ENCODE measurements at regions of chr5 and their contacts with region 1.

Region 1: DNA sequence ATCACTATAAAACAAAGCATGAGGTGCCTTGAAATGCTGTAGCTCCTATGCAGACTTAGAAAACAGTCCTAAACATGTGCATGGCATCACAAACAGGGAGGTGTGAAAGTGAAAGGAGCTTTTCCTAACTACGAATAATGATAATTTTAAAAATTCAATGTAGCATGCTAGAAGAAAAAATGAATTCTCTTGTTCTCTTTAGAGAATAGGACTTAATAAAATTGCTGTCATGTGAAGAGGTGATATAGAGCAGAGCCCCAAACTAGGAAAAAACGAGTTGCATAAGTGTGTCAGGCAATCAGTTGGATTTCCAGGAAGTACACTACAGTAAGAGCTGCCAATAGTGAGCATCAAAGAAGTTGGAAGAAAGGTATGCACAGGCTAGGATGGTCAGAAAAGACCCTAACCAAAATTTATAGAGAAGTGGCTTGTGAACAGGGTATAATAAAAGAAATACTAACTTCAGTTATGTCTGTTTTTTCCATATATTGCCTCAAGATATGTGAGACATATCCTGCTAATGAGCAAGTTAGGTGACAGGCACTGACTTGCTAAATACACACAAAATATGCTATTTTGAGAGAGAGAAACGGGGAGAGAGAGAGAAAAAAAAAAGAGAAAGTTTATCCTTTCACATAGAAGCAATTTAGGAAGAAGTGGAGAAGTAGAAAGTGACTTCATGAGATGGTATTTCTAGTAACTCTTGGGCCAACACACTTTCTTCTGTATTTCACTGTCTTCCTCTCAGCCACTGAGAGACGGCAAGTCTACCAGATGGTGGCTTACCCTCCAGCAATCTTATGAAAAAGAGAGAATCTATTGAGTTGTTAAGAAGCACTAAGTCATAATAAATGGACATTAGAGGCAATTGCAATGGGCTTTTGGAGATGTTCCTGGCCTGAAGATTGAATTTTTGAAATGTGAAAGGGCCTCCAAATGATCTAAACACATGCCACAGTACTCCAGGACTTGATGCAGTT is 18.0 kb downstream of the ITGA2 start:
- DNase-seq: peak; percentile 71
- H3K4me3 ChIP-seq: peak overlapping the region in 2 of 3 experiments; percentile 1 to 18
- H3K27ac ChIP-seq: peak overlapping the region; percentile 86
- H3K4me1 ChIP-seq: peaks cover 77% of the 10 kb centered on the region
- H3K27me3 ChIP-seq: no peaks in the 10 kb centered on the region
- CTCF ChIP-seq: no peak

Region 2: DNA sequence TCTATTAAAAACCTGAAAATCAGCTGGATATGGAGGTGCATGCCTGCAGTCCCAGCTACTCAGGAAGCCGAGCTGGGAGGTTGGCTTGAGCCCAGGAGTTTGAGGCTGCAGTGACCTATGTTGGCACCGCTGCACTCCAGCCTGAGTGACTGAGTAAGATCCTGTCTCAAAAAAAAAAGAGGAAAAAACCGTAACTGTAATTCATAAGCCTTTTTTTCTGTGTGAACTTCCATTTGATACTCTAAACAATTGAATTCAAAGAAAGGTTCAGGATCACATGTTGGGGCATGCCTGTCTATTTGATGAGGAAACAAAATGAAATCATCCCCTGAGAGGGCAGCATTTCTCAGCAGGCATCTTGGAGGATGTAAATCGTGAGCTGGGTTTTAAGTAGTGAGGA is 20.7 kb after region 1 on chr5:
- CTCF ChIA-PET with region 1: no interaction called
- dilution Hi-C with region 1: no loop called
- in situ Hi-C with region 1: no loop called
- intact Hi-C with region 1: loop called (anchors 1 kb)
- DNase-seq: peak; percentile 92
- H3K4me3 ChIP-seq: no peak overlapping the region
- H3K27ac ChIP-seq: peak overlapping the region; percentile 60
- H3K4me1 ChIP-seq: peaks cover 79% of the 10 kb centered on the region
- H3K27me3 ChIP-seq: no peaks in the 10 kb centered on the region
- CTCF ChIP-seq: no peak

Region 3: DNA sequence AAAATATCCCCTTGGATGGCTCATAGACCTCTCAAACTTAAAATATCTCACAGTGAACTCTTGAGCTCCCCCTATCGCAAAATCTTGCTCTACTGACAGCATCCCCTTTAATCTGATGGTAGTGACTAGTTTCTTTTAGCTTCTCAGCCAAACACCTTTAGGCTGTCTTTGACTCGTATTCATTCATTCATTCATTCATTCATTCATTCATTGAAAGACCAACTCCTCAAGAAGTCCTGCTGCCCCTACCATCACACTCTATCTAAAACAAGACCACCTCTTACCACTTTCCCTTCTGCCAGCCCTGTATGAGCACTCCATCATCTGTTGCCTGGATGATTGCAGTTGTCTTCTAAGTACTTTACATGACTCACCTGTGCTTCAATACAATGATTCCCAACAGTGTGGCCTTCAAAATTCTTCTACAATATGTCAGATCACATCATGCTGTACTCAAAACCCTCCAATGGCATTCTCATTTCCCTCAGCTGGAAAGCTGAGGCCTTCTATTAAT is 28.7 kb after region 1 on chr5:
- CTCF ChIA-PET with region 1: interaction called, 3 read pairs
- dilution Hi-C with region 1: no loop called
- in situ Hi-C with region 1: no loop called
- intact Hi-C with region 1: loop called (anchors 2 kb)
- DNase-seq: peak; percentile 96
- H3K4me3 ChIP-seq: no peak overlapping the region
- H3K27ac ChIP-seq: peak overlapping the region; percentile 96
- H3K4me1 ChIP-seq: peaks cover 77% of the 10 kb centered on the region
- H3K27me3 ChIP-seq: no peaks in the 10 kb centered on the region
- CTCF ChIP-seq: peak; percentile 36 to 48

Measured in mammary epithelial cell (primary cell).